Calu3 (cell line): ENCODE measurements at regions of chr3 and their contacts with region 1.

Region 1: DNA sequence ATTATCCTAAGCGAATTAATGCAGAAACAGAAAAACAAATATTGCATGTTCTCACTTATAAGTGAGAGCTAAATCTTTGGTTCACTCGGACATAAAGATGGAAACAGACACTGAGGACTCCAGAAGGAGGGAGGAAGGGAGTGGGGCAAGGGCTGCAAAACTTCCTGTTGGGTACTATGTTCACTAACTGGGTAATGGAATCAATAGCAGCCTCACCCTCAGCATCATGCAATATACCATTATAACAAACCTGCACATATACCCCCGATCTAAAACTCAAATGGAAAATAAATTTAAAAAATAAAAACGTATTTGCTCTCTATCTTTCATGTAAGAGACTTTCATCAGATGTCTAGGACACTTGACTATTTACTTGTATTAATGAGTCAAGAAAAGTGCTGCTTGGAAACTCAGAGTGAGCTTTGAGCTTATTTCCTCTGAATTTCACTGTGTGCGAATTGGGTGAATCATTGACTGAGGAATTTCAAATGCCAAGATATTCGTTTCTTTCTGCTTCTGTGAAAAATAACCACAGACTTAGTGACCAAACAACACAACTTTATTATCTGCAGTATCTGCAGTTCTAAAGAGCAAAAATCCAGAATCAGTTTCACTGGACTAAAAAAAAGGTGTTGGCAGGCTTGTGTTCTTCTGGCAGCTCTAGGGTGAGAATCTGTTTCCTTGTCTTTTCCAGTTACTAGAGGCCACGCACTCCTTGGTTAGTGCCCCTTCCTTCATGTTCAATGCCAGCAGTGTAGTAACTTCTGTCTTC is 18.4 kb downstream of the TM4SF18 start:
- DNase-seq: no peak
- H3K4me3 Mint-ChIP-seq: peak overlapping the region; percentile 16
- H3K27ac Mint-ChIP-seq: peak overlapping the region; percentile 91
- H3K4me1 Mint-ChIP-seq: peaks cover 74% of the 10 kb centered on the region
- H3K27me3 Mint-ChIP-seq: no peaks in the 10 kb centered on the region
- CTCF ChIP-seq: no peak

Region 2: GRCh38 chr3:149339931-149340309 is 24.9 kb after region 1 on chr3:
- CTCF ChIA-PET with region 1: interaction called, 5 read pairs
- intact Hi-C with region 1: loop called (anchors 2 kb)
- DNase-seq: peak; percentile 97
- H3K4me3 Mint-ChIP-seq: no peak overlapping the region
- H3K27ac Mint-ChIP-seq: peak overlapping the region; percentile 89
- H3K4me1 Mint-ChIP-seq: peaks cover 44% of the 10 kb centered on the region
- H3K27me3 Mint-ChIP-seq: no peaks in the 10 kb centered on the region
- CTCF ChIP-seq: no peak

Region 3: DNA sequence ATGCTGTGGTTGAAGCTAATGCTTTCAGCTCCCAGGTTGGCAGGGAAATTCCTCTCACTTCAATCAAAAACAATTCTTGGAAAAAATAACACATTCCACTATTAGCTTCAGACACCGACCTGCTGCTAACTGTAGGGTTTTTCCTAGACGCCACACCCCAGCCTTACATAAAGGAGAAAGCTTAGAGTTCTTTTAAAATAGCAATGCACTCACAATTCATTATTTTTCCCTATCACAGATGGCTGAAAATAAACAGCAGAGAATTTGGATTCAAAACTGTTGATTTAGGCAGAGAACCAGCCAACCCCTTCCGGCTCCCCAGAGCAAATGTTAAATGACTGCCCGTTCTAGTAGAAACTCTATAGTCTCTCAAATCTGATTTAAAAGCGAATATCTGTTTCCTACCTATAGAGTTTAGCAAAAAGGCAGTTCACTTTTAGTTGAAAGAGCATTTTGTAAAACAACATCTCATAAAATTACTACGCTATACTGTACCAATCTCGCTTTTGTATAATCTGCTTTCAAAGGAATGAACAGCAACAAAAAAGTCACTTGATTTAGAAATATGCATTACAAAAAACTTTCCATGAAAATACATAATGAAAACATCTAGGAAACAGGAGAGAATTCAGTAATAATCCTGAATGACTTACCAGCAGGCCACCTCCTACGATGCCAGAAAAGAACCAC is 61.9 kb after region 1 on chr3:
- CTCF ChIA-PET with region 1: no interaction called
- intact Hi-C with region 1: no loop called
- DNase-seq: no peak
- H3K4me3 Mint-ChIP-seq: peak overlapping the region; percentile 75
- H3K27ac Mint-ChIP-seq: peak overlapping the region; percentile 95
- H3K4me1 Mint-ChIP-seq: peaks cover 53% of the 10 kb centered on the region
- H3K27me3 Mint-ChIP-seq: no peaks in the 10 kb centered on the region
- CTCF ChIP-seq: no peak